ENCODE measurements at regions of chr19 and their contacts with region 1.

Region 1: GRCh38 chr19:55289117-55289796 is 5.5 kb downstream of the BRSK1 start:
- DNase-seq: no peak
- ATAC-seq: no peak
- H3K4me3 ChIP-seq: no peak overlapping the region
- H3K4me3 Mint-ChIP-seq: no peak overlapping the region
- H3K27ac ChIP-seq: no peak overlapping the region
- H3K27ac Mint-ChIP-seq: no peak overlapping the region
- H3K4me1 ChIP-seq: peaks cover 0 to 20% of the 10 kb centered on the region in 2 experiments
- H3K4me1 Mint-ChIP-seq: peaks cover 9 to 12% (median 9%) of the 10 kb centered on the region in 3 donors
- H3K27me3 ChIP-seq: peaks cover 0 to 2% of the 10 kb centered on the region in 2 experiments
- H3K27me3 Mint-ChIP-seq: no peaks in the 10 kb centered on the region

Region 2: DNA sequence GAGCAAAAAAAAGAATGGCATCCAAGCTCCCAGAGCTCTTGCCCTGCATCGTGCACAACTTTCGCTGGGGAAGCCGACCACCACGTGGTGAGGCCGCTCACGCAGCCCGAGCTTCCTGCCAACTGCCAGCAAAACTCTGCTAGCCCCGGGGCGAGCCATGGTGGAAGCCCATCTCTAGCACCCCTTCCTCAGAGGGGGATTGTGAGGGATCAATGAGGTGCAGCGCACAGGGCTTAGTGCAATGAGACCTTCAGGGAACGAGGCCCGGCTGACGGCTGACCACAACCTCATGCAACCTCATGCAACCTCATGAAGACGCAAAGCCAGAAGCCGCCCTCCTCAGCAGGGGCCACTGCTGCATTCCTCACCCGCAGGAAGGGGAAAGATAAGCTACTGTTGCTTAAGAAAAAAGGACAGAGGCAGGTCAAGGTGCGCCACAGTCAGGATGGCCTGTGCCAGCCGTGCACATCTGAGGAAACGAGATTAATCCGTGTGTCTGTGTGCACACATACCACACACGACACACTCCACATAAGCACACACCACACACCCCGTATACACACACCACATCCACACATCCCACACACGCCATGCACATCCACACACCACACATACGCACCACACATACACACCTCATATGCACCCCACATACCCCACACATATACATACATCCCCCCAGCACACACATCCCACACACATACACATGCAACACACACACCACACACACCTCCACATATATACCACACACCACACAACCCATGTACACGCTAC is 18.9 kb before region 1 on chr19:
- CTCF ChIA-PET with region 1: no interaction called
- POLR2A ChIA-PET with region 1: no interaction called
- DNase-seq: no peak
- ATAC-seq: no peak
- H3K4me3 ChIP-seq: no peak overlapping the region
- H3K4me3 Mint-ChIP-seq: no peak overlapping the region
- H3K27ac ChIP-seq: no peak overlapping the region
- H3K27ac Mint-ChIP-seq: no peak overlapping the region
- H3K4me1 ChIP-seq: peaks cover 0 to 4% of the 10 kb centered on the region in 2 experiments
- H3K4me1 Mint-ChIP-seq: peaks cover 0 to 4% (median 4%) of the 10 kb centered on the region in 3 donors
- H3K27me3 ChIP-seq: no peaks in the 10 kb centered on the region
- H3K27me3 Mint-ChIP-seq: no peaks in the 10 kb centered on the region

Region 3: GRCh38 chr19:55301459-55302317 is 12.4 kb after region 1 on chr19:
- CTCF ChIA-PET with region 1: interaction called in 1 of 2 experiments, 10 read pairs
- POLR2A ChIA-PET with region 1: no interaction called
- DNase-seq: peak; percentile 74 to 97 (median 90)
- ATAC-seq: peak; percentile 87 to 91 (median 89)
- H3K4me3 ChIP-seq: peak overlapping the region; percentile 50 to 67
- H3K4me3 Mint-ChIP-seq: peak overlapping the region; percentile 78 to 83 (median 81)
- H3K27ac ChIP-seq: peak overlapping the region; percentile 53
- H3K27ac Mint-ChIP-seq: peak overlapping the region; percentile 70 to 86
- H3K4me1 ChIP-seq: peaks cover 0 to 17% of the 10 kb centered on the region in 2 experiments
- H3K4me1 Mint-ChIP-seq: peaks cover 11 to 13% (median 11%) of the 10 kb centered on the region in 3 donors
- H3K27me3 ChIP-seq: peaks cover 0 to 17% of the 10 kb centered on the region in 2 experiments
- H3K27me3 Mint-ChIP-seq: no peaks in the 10 kb centered on the region

Measured in T-cell (primary cell).